ENCODE measurements at regions of chr4 and their contacts with region 1.

Region 1: DNA sequence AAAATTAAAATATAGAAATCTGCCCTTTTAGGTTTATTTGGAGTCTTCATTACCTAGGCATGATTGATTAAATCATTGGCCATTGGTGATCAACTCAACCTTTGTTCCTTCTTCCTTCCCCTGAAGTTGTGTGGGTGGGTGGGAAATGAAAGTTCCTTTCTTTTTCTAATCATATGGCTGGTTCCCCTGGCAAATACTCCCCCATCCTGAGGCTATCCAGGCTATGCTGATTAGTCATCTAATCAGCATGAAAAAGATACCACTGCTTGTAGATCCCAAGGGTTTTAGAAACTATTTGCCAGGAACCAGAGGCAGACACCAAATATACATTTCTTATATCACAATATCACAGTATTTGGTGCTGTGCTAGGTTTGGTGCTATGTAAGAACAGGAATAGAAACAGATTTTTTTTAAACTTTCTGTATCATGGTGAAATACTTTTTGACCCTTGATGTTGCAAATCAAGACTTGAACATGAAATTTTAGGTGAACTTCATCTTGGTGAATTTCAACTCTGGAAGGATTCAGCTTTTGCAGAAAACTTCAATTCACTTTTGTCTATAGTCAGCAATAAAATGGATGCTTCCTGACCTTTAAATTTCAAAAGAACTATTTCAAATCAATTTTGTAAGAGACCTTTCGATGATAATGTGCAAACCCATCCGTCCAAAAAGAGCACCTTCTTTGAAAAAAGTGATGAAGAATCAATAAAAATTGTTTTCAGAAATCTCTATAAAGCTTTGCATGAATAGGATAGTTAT is 71.1 kb downstream of the CCSER1 start:
- DNase-seq: no peak
- ATAC-seq: no peak
- H3K4me3 ChIP-seq: no peak overlapping the region
- H3K27ac ChIP-seq: no peak overlapping the region
- H3K4me1 ChIP-seq: no peaks in the 10 kb centered on the region
- H3K27me3 ChIP-seq: no peaks in the 10 kb centered on the region
- CTCF ChIP-seq: no peak
- EP300 ChIP-seq: no peak
- POLR2A ChIP-seq: no peak
- RAD21 ChIP-seq: no peak

Region 2: GRCh38 chr4:90148574-90149148 is 49.6 kb before region 1 on chr4:
- CTCF ChIA-PET with region 1: no interaction called
- POLR2A ChIA-PET with region 1: no interaction called
- in situ Hi-C with region 1: no loop called
- intact Hi-C with region 1: loop called (anchors 2 kb)
- DNase-seq: no peak
- ATAC-seq: no peak
- H3K4me3 ChIP-seq: no peak overlapping the region
- H3K27ac ChIP-seq: no peak overlapping the region
- H3K4me1 ChIP-seq: no peaks in the 10 kb centered on the region
- H3K27me3 ChIP-seq: no peaks in the 10 kb centered on the region
- CTCF ChIP-seq: no peak
- EP300 ChIP-seq: no peak
- POLR2A ChIP-seq: no peak
- RAD21 ChIP-seq: no peak